ENCODE measurements at regions of chrX and their contacts with region 1.

Region 1: GRCh38 chrX:105328815-105329214 is 108.3 kb upstream of the TEX13A start:
- DNase-seq: peak; percentile 38
- H3K4me3 ChIP-seq: no peak overlapping the region
- H3K27ac ChIP-seq: peak overlapping the region; percentile 57
- H3K4me1 ChIP-seq: peaks cover 15% of the 10 kb centered on the region
- H3K27me3 ChIP-seq: no peaks in the 10 kb centered on the region
- CTCF ChIP-seq: no peak
- POLR2A ChIP-seq: no peak

Region 2: GRCh38 chrX:105260291-105261043 is 68.3 kb before region 1 on chrX:
- CTCF ChIA-PET with region 1: no interaction called
- POLR2A ChIA-PET with region 1: no interaction called
- dilution Hi-C with region 1: no loop called
- intact Hi-C with region 1: no loop called
- DNase-seq: no peak
- H3K4me3 ChIP-seq: no peak overlapping the region
- H3K27ac ChIP-seq: no peak overlapping the region
- H3K4me1 ChIP-seq: no peaks in the 10 kb centered on the region
- H3K27me3 ChIP-seq: no peaks in the 10 kb centered on the region
- CTCF ChIP-seq: no peak
- POLR2A ChIP-seq: no peak

Region 3: GRCh38 chrX:105282077-105282476 is 46.7 kb before region 1 on chrX:
- CTCF ChIA-PET with region 1: no interaction called
- POLR2A ChIA-PET with region 1: no interaction called
- dilution Hi-C with region 1: no loop called
- intact Hi-C with region 1: loop called (anchors 1 kb)
- DNase-seq: peak; percentile 66
- H3K4me3 ChIP-seq: no peak overlapping the region
- H3K27ac ChIP-seq: peak overlapping the region; percentile 60
- H3K4me1 ChIP-seq: peaks cover 15% of the 10 kb centered on the region
- H3K27me3 ChIP-seq: no peaks in the 10 kb centered on the region
- CTCF ChIP-seq: no peak
- POLR2A ChIP-seq: no peak

Region 4: DNA sequence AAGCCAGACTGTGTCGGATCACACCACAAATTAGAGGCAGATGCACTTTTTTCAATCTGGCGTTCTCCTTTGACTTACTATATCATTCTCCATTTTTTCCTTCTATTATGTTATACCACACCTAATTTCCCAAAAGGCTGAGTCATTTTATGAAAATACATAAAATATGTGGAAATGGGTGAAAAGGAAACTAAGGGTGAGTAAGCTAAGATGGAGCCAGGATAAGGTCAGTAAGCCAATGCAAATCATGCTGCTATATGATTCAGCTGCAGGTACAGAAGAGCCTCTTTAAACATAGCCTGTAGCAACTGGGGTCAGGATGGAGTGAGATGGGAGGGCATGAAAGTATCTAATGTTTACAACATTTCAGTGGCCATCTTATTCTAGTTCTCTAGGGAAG is 14.3 kb before region 1 on chrX:
- CTCF ChIA-PET with region 1: no interaction called
- POLR2A ChIA-PET with region 1: no interaction called
- dilution Hi-C with region 1: no loop called
- intact Hi-C with region 1: loop called (anchors 1 kb)
- DNase-seq: peak; percentile 57
- H3K4me3 ChIP-seq: peak overlapping the region in 1 of 3 experiments; percentile 76
- H3K27ac ChIP-seq: peak overlapping the region; percentile 92
- H3K4me1 ChIP-seq: peaks cover 19% of the 10 kb centered on the region
- H3K27me3 ChIP-seq: no peaks in the 10 kb centered on the region
- CTCF ChIP-seq: no peak
- POLR2A ChIP-seq: no peak

Region 5: DNA sequence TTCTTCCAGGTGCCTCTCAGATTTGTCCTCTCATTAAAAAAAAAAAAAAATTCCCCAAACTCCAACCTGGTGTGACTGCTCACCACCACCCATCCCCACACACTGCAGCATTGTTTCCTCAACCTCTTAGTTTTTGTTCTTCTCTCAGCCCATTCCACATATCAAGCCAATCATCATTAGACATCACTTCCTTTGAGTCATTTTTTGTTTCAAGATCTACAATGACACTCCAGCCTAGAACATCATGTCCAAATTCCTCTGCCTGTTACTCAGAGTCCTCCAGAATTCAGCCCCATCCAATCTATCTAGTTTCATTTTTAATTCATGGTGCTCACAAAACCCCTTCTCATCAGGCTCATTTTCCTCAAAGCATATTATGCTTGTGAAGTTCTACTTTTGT is 154.2 kb after region 1 on chrX:
- CTCF ChIA-PET with region 1: no interaction called
- POLR2A ChIA-PET with region 1: no interaction called
- dilution Hi-C with region 1: no loop called
- intact Hi-C with region 1: loop called (anchors 1 kb)
- DNase-seq: peak; percentile 16
- H3K4me3 ChIP-seq: no peak overlapping the region
- H3K27ac ChIP-seq: peak overlapping the region; percentile 55
- H3K4me1 ChIP-seq: peaks cover 8% of the 10 kb centered on the region
- H3K27me3 ChIP-seq: no peaks in the 10 kb centered on the region
- CTCF ChIP-seq: no peak
- POLR2A ChIP-seq: no peak